Posterior vena cava (tissue), 2 donors: ENCODE measurements at regions of chr4 and their contacts with region 1.

Region 1: GRCh38 chr4:102114123-102114630 is 231.1 kb downstream of the SLC39A8 start:
- DNase-seq: no peak

Region 2: DNA sequence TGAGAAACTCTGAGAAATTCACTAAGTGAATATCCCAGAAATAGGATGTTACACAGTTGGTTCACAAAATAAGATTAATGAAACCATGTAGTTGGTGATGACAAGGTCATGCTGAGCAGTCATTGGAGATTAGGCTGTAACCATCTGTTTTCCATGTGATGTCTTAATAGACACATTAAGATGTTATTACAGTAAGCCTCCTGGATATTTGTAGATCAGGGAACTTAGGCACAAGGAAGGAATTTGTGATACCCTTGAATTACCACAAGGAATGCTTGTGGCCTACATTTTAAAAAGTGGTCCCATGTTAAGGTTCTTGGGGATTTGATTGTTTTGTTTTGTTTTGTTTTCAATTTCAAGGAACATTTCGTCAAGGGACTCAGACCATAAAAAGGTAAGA is 509.2 kb before region 1 on chr4:
- intact Hi-C with region 1: loop called in 1 of 2 experiments (anchors 5 kb)
- DNase-seq: no peak

Region 3: GRCh38 chr4:102129810-102130209 is 15.6 kb after region 1 on chr4:
- intact Hi-C with region 1: loop called in 1 of 2 experiments (anchors 1 kb)
- DNase-seq: no peak